ENCODE measurements at regions of chr7 and their contacts with region 1.

Region 1: GRCh38 chr7:149195180-149196150 is at the start of gene ZNF282:
- DNase-seq: peak; percentile 95 to 98 (median 98)
- ATAC-seq: peak; percentile 97
- H3K4me3 ChIP-seq: peak within 1 kb of the TSS; percentile 99
- H3K27ac ChIP-seq: peak within 1 kb of the TSS; percentile 88
- H3K4me1 ChIP-seq: peaks cover 14 to 31% of the 10 kb centered on the region in 2 experiments; a peak in 4 of 5 replicates
- H3K27me3 ChIP-seq: no peaks in the 10 kb centered on the region
- CTCF ChIP-seq: peak; percentile 89 to 95 (median 93)
- EP300 ChIP-seq: peak; percentile 17; the same call in 1 of the 2 replicates
- POLR2A ChIP-seq: peak; percentile 92
- RAD21 ChIP-seq: peak; percentile 69 to 71
- polyA plus RNA-seq, gene ZNF282: 0.76 to 1.3 TPM

Region 2: GRCh38 chr7:149180722-149181449 is 14.6 kb before region 1 on chr7:
- CTCF ChIA-PET with region 1: interaction called, 3 read pairs
- POLR2A ChIA-PET with region 1: interaction called, 12 read pairs
- in situ Hi-C with region 1: no loop called
- intact Hi-C with region 1: no loop called
- DNase-seq: no peak
- ATAC-seq: no peak
- H3K4me3 ChIP-seq: no peak overlapping the region
- H3K27ac ChIP-seq: no peak overlapping the region
- H3K4me1 ChIP-seq: peaks cover 0 to 4% of the 10 kb centered on the region in 2 experiments; a peak in 1 of 5 replicates
- H3K27me3 ChIP-seq: no peaks in the 10 kb centered on the region
- CTCF ChIP-seq: no peak
- EP300 ChIP-seq: no peak
- POLR2A ChIP-seq: peak; percentile 36; the same call in 1 of the 2 replicates
- RAD21 ChIP-seq: no peak

Region 3: GRCh38 chr7:149205711-149206393 is 10.4 kb after region 1 on chr7:
- CTCF ChIA-PET with region 1: interaction called, 4 read pairs
- POLR2A ChIA-PET with region 1: interaction called, 18 read pairs
- in situ Hi-C with region 1: no loop called
- intact Hi-C with region 1: no loop called
- DNase-seq: no peak
- ATAC-seq: no peak
- H3K4me3 ChIP-seq: no peak overlapping the region
- H3K27ac ChIP-seq: no peak overlapping the region
- H3K4me1 ChIP-seq: 0 out of 5 replicates have a peak, but pooled peaks cover 0 to 2% of the 10 kb centered on the region in 2 experiments
- H3K27me3 ChIP-seq: no peaks in the 10 kb centered on the region
- CTCF ChIP-seq: no peak
- EP300 ChIP-seq: no peak
- POLR2A ChIP-seq: 0 out of 2 replicates have a peak, but pooled peaks have one; percentile 32
- RAD21 ChIP-seq: no peak

Region 4: GRCh38 chr7:150778738-150779301 is 1583.4 kb after region 1 on chr7:
- CTCF ChIA-PET with region 1: no interaction called
- POLR2A ChIA-PET with region 1: no interaction called
- in situ Hi-C with region 1: no loop called
- intact Hi-C with region 1: no loop called
- DNase-seq: peak; percentile 80 to 85 (median 83)
- ATAC-seq: peak; percentile 99
- H3K4me3 ChIP-seq: no peak overlapping the region
- H3K27ac ChIP-seq: no peak overlapping the region
- H3K4me1 ChIP-seq: no peaks in the 10 kb centered on the region
- H3K27me3 ChIP-seq: peaks cover 10 to 15% of the 10 kb centered on the region in 2 experiments; a peak in 3 of 5 replicates
- CTCF ChIP-seq: peak; percentile 93 to 98 (median 97)
- EP300 ChIP-seq: peak; percentile 12; the same call in 1 of the 2 replicates
- POLR2A ChIP-seq: no peak
- RAD21 ChIP-seq: peak; percentile 95 to 97